Activated CD4-positive, alpha-beta T cell treated with anti-CD3 and anti-CD28 coated beads for 36 hours (primary cell): ENCODE measurements at regions of chr14 and their contacts with region 1.

Region 1: DNA sequence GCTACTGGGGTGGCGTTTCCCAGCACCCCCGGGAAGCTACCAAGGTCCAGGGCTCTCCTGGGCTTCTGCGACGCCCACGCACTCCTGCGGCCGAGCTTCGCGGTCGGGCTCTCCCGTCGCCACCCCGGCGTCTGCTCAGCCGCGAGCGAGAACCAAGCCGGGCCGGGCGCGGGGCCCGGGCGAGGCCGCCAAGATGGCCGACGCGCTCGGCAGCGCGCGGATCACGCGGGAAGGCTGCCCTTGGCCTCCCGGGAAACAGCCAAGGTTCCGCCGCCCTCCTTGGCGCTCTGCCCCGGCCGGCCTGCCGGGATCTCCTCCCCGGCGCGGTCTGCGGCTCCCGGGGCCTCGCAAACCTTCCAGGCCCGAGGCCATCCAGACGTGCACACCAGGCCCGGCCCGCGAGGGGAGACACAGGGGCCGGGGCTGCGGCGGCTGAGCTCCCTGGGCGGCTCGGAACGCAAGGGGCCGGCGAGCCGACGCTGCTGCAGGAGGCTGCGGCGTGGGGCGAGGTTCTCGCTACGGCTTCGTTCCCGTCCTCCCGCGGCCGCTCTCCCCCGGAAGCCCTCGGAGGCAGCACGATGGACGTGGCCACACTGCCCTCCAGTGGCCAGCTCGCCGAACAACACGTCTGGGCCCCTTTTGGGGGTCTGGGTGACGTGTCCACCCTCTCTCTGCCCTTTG is 23.5 kb upstream of the ZFP36L1 start:
- DNase-seq: peak; percentile 93
- ATAC-seq: peak; percentile 72
- H3K4me3 Mint-ChIP-seq: peak overlapping the region; percentile 74
- H3K27ac Mint-ChIP-seq: peak overlapping the region; percentile 94
- H3K4me1 Mint-ChIP-seq: peaks cover 69% of the 10 kb centered on the region
- H3K27me3 Mint-ChIP-seq: no peaks in the 10 kb centered on the region

Region 2: DNA sequence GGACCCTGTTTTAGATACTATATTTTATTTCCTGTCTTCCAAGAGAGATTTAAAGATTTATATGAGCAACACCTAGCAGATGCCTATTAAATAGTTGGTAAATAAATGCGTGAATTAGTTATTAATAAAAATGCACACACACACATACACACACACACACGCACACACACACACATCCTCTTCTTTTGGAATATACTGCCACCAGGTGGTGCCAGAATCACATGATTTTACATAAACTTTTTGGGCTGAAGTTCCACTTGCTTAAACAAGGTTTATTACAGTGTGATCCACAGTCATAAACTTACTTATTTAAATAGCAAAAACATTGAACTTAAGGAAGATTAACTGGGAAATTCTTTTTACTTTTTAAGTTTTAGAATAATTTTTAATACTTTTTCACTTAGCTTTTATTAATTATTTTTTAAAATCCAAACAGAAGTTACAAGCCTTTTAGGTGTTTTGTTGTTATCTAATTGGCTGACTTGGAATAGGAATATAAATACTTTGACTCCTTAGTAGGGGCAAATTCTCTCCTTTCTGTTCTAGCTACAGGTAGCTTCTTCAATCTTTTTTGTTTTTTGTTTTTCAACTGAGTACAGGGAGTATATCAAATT is 979.3 kb before region 1 on chr14:
- CTCF ChIA-PET with region 1: no interaction called
- POLR2A ChIA-PET with region 1: no interaction called
- intact Hi-C with region 1: loop called (anchors 1 to 10 kb)
- DNase-seq: peak; percentile 68
- ATAC-seq: peak; percentile 39
- H3K4me3 Mint-ChIP-seq: no peak overlapping the region
- H3K27ac Mint-ChIP-seq: no peak overlapping the region
- H3K4me1 Mint-ChIP-seq: no peaks in the 10 kb centered on the region
- H3K27me3 Mint-ChIP-seq: no peaks in the 10 kb centered on the region

Region 3: GRCh38 chr14:67943947-67944346 is 872.5 kb before region 1 on chr14:
- CTCF ChIA-PET with region 1: interaction called, 5 read pairs
- POLR2A ChIA-PET with region 1: interaction called, 7 read pairs
- intact Hi-C with region 1: loop called (anchors 2 kb)
- DNase-seq: peak; percentile 59
- ATAC-seq: peak; percentile 66
- H3K4me3 Mint-ChIP-seq: no peak overlapping the region
- H3K27ac Mint-ChIP-seq: no peak overlapping the region
- H3K4me1 Mint-ChIP-seq: no peaks in the 10 kb centered on the region
- H3K27me3 Mint-ChIP-seq: no peaks in the 10 kb centered on the region

Region 4: GRCh38 chr14:68369281-68370056 is 446.9 kb before region 1 on chr14:
- CTCF ChIA-PET with region 1: no interaction called
- POLR2A ChIA-PET with region 1: interaction called, 3 read pairs
- intact Hi-C with region 1: loop called in 1 of 2 experiments (anchors 5 kb)
- DNase-seq: peak; percentile 20
- ATAC-seq: peak; percentile 94
- H3K4me3 Mint-ChIP-seq: no peak overlapping the region
- H3K27ac Mint-ChIP-seq: peak overlapping the region; percentile 55
- H3K4me1 Mint-ChIP-seq: peaks cover 46% of the 10 kb centered on the region
- H3K27me3 Mint-ChIP-seq: no peaks in the 10 kb centered on the region

Region 5: GRCh38 chr14:68665131-68665530 is 151.3 kb before region 1 on chr14:
- CTCF ChIA-PET with region 1: no interaction called
- POLR2A ChIA-PET with region 1: no interaction called
- intact Hi-C with region 1: no loop called
- DNase-seq: no peak
- ATAC-seq: no peak
- H3K4me3 Mint-ChIP-seq: no peak overlapping the region
- H3K27ac Mint-ChIP-seq: peak overlapping the region; percentile 81
- H3K4me1 Mint-ChIP-seq: peaks cover 53% of the 10 kb centered on the region
- H3K27me3 Mint-ChIP-seq: no peaks in the 10 kb centered on the region

Region 6: GRCh38 chr14:68714991-68715964 is 101.1 kb before region 1 on chr14:
- CTCF ChIA-PET with region 1: interaction called, 4 read pairs
- POLR2A ChIA-PET with region 1: no interaction called
- intact Hi-C with region 1: loop called in 1 of 2 experiments (anchors 1 kb)
- DNase-seq: peak; percentile 48
- ATAC-seq: peak; percentile 62
- H3K4me3 Mint-ChIP-seq: no peak overlapping the region
- H3K27ac Mint-ChIP-seq: peak overlapping the region; percentile 61
- H3K4me1 Mint-ChIP-seq: peaks cover 53% of the 10 kb centered on the region
- H3K27me3 Mint-ChIP-seq: no peaks in the 10 kb centered on the region

Region 7: DNA sequence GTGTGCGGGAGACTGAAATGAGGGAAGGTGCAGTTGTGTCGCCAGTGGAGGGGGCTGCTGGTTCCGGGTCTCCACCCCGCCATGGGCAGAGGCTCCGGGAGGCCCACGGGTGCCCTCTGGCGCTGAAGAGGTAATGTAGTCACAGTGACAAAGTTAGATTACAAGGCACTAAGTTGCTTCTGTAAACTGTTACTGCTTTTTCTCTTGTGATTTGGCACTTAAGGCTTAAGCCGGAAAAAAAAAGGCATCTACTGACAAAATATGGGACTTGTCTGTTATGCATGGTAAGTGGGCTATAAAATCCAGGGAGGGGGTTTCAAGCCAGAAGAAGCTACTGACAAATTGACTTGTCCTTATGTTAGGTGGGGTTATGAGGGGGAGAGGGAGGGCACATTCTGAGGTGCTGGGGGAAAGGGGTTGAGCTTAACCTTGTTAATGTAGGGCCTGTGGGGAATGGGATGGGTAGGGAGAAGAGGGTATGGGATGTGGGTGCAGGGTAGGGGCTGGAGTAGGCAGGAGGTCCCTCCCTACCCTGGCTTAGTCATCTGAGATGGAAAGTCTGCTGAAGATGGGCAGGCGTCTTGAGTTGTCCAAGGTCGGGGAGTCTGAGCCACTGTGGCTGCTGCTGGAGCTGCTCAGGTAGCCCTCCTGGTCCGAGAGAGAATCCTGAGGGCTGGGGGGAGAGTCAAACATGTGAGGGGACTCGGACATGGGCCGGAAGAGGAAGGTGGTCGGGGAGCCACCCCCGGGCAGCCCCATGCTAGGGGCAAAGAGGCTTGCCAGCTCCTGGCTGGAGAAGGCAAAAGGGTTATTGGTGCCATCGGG is 27.2 kb before region 1 on chr14:
- CTCF ChIA-PET with region 1: interaction called, 17 read pairs
- POLR2A ChIA-PET with region 1: interaction called, 68 read pairs
- intact Hi-C with region 1: loop called (anchors 1 kb)
- DNase-seq: peak; percentile 94
- ATAC-seq: peak; percentile 47
- H3K4me3 Mint-ChIP-seq: peak overlapping the region; percentile 90
- H3K27ac Mint-ChIP-seq: peak overlapping the region; percentile 100
- H3K4me1 Mint-ChIP-seq: peaks cover 53% of the 10 kb centered on the region
- H3K27me3 Mint-ChIP-seq: no peaks in the 10 kb centered on the region

Region 8: GRCh38 chr14:68843471-68844209 is 27.2 kb after region 1 on chr14:
- CTCF ChIA-PET with region 1: interaction called, 18 read pairs
- POLR2A ChIA-PET with region 1: interaction called, 6 read pairs
- intact Hi-C with region 1: no loop called
- DNase-seq: peak; percentile 87
- ATAC-seq: peak; percentile 63
- H3K4me3 Mint-ChIP-seq: no peak overlapping the region
- H3K27ac Mint-ChIP-seq: peak overlapping the region; percentile 11
- H3K4me1 Mint-ChIP-seq: peaks cover 25% of the 10 kb centered on the region
- H3K27me3 Mint-ChIP-seq: peaks cover 5% of the 10 kb centered on the region

Region 9: GRCh38 chr14:68939893-68940613 is 123.7 kb after region 1 on chr14:
- CTCF ChIA-PET with region 1: no interaction called
- POLR2A ChIA-PET with region 1: no interaction called
- intact Hi-C with region 1: no loop called
- DNase-seq: no peak
- ATAC-seq: no peak
- H3K4me3 Mint-ChIP-seq: no peak overlapping the region
- H3K27ac Mint-ChIP-seq: no peak overlapping the region
- H3K4me1 Mint-ChIP-seq: peaks cover 80% of the 10 kb centered on the region
- H3K27me3 Mint-ChIP-seq: no peaks in the 10 kb centered on the region